Activated CD8-positive, alpha-beta T cell treated with anti-CD3 and anti-CD28 coated beads, Interleukin-2, amount 10 ng/mL, durations not matched to agents 7 days and 5 days (primary cell): ENCODE measurements at regions of chr4 and their contacts with region 1.

Region 1: GRCh38 chr4:47122592-47123291 is 91.4 kb downstream of the GABRB1 start:
- DNase-seq: peak; percentile 72
- ATAC-seq: peak; percentile 64
- H3K4me3 Mint-ChIP-seq: no peak overlapping the region
- H3K27ac Mint-ChIP-seq: no peak overlapping the region
- H3K4me1 Mint-ChIP-seq: no peaks in the 10 kb centered on the region
- H3K27me3 Mint-ChIP-seq: peaks cover 2% of the 10 kb centered on the region

Region 2: DNA sequence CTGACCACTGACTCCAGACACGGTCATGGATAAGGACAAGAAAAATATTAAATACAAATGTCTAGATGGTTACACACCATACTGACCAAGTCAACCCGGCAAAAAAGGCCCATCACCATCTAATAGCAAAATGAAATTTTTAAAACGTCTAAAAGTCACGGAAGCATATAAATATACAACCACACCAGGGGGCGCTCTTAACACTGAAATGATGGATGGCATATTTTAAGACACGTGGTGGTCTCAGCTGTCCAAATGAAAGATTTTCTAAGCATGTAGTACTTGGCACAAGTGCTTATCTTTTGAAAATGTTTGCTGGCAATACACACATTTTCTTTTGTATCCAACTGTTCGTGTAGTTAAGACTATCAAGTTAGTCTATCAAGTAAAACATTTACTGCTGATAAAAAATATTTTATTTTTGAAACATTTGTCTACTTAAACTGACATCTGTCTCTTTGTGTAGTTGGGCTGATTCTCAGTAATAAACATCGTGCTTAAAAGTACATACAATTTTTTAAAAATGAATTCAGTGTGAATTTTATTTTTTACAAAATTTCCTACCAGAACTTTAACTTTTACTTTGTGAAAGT is 278.3 kb before region 1 on chr4:
- CTCF ChIA-PET with region 1: interaction called, 15 read pairs
- POLR2A ChIA-PET with region 1: no interaction called
- DNase-seq: peak; percentile 70
- ATAC-seq: no peak
- H3K4me3 Mint-ChIP-seq: no peak overlapping the region
- H3K27ac Mint-ChIP-seq: no peak overlapping the region
- H3K4me1 Mint-ChIP-seq: no peaks in the 10 kb centered on the region
- H3K27me3 Mint-ChIP-seq: no peaks in the 10 kb centered on the region

Region 3: DNA sequence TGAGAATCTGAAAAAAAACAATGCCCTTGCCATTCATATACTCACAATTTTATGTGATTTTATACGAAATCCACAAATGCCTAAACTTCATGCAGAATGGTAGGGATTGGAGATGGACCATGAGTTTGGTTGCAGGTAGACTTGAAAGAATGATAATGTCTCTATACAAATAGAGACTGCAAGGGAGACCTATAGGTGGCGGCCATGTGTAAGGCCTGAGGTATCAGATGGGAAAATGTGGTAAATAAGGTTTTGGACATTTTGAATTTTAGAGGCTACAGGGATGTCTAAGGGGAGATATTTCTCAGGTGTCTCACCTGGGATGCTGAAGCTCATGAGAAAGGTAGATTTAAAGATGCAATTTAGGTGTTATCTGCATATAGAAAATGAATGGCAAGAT is 13.4 kb before region 1 on chr4:
- CTCF ChIA-PET with region 1: interaction called, 18 read pairs
- POLR2A ChIA-PET with region 1: no interaction called
- DNase-seq: no peak
- ATAC-seq: no peak
- H3K4me3 Mint-ChIP-seq: no peak overlapping the region
- H3K27ac Mint-ChIP-seq: no peak overlapping the region
- H3K4me1 Mint-ChIP-seq: no peaks in the 10 kb centered on the region
- H3K27me3 Mint-ChIP-seq: no peaks in the 10 kb centered on the region